SK-N-SH (cell line): ENCODE measurements at regions of chr11 and their contacts with region 1.

Region 1: DNA sequence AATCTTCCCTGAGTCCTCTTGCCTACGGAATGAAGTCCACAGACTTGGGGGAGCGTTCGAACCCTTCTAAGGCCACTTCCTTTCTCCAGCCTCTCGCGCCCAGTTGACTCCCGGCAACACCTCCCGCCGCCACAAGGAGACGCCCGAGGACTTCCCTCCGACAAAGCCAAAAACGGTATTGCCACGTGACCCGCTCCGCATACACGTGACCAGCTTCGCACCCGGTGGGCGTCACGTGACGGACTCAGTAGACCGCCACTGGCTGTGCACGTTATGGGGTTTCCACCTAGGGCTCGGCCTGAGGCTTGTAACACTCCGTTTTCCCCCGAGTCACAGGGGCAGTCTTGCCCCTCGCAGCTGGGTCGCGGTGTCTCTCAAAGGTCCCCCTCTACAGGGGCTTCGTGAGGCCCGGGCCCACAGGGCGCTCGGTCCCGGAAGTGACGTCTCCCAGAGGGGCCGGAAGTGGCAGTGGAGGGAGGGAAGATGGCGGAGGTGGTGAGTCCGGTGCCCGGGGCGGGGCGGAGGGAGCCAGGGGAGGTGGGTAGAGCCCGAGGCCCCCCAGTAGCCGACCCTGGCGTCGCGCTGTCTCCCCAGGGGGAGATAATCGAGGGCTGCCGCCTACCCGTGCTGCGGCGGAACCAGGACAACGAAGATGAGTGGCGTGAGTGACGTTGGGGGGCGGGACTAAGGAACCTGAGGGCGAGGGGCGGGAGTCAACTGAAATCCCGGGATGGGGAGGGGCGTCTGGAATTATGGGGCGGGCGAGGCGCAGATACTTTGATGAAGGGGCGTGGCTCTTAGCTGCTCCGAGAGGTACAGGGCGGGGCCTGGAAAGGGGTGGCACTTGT is at the start of gene KAT5:
- DNase-seq: peak; percentile 95
- H3K4me3 ChIP-seq: peak within 1 kb of the TSS; percentile 62 to 72
- H3K27ac ChIP-seq: peak within 1 kb of the TSS; percentile 96 to 98
- H3K4me1 ChIP-seq: peaks cover 6 to 8% of the 10 kb centered on the region in 2 experiments; a peak in 1 of 4 replicates
- H3K27me3 ChIP-seq: no peaks in the 10 kb centered on the region
- CTCF ChIP-seq: peak; percentile 95
- EP300 ChIP-seq: peak in 1 of 2 experiments; percentile 34; a peak in 1 of 4 replicates
- RAD21 ChIP-seq: peak; percentile 96
- polyA plus RNA-seq, gene KAT5: 44.5 and 51.9 TPM in 2 replicates

Region 2: DNA sequence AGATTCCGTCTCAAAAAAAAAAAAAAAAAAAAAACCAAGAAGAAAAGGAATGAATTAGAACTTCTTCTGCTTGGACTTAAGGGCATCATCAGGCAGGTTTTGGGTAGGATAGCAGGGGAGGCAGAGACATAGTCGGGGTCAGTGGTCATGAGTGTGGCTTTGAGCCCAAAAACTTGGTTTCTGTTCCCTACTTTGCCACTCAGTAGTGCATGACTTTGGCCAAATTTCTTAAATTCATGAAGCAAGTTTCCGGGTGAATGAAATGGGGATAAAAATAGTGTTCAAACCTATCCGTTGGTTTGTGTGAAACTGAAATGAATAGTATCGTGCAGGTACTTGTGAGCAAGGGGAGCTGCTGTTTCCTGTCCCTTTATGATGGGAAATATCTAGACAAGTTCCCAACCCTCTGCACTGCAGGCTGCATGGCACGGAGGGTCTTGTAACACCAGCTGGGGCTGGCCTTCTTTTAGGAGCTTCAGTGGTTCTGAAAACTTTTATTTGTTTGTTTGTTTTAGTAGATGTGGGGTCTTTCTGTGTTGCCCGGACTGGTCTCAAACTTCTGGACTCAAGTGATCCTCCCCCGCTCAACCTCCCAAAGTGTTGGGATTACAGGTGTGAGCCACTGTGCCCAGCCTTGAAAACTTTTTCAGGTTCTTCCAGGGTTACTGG is 271.0 kb before region 1 on chr11:
- CTCF ChIA-PET with region 1: no interaction called
- POLR2A ChIA-PET with region 1: no interaction called
- DNase-seq: no peak
- H3K4me3 ChIP-seq: no peak overlapping the region
- H3K27ac ChIP-seq: peak overlapping the region; percentile 1 to 100; a peak in 3 of 4 replicates
- H3K4me1 ChIP-seq: peaks cover 3 to 20% of the 10 kb centered on the region in 2 experiments; a peak in 3 of 4 replicates
- H3K27me3 ChIP-seq: no peaks in the 10 kb centered on the region
- CTCF ChIP-seq: no peak
- EP300 ChIP-seq: no peak
- RAD21 ChIP-seq: no peak

Region 3: GRCh38 chr11:65743928-65744698 is 32.1 kb after region 1 on chr11:
- CTCF ChIA-PET with region 1: interaction called, 26 read pairs
- POLR2A ChIA-PET with region 1: interaction called, 10 read pairs
- DNase-seq: peak; percentile 73
- H3K4me3 ChIP-seq: no peak overlapping the region
- H3K27ac ChIP-seq: no peak overlapping the region
- H3K4me1 ChIP-seq: peaks cover 0 to 10% of the 10 kb centered on the region in 2 experiments; a peak in 1 of 4 replicates
- H3K27me3 ChIP-seq: peaks cover 10% of the 10 kb centered on the region; the same call in 1 of the 2 replicates
- CTCF ChIP-seq: peak; percentile 49
- EP300 ChIP-seq: no peak
- RAD21 ChIP-seq: peak; percentile 69

Region 4: GRCh38 chr11:65785319-65786000 is 73.5 kb after region 1 on chr11:
- CTCF ChIA-PET with region 1: interaction called, 46 read pairs
- POLR2A ChIA-PET with region 1: interaction called, 5 read pairs
- DNase-seq: peak; percentile 28
- H3K4me3 ChIP-seq: no peak overlapping the region
- H3K27ac ChIP-seq: no peak overlapping the region
- H3K4me1 ChIP-seq: peaks cover 0 to 2% of the 10 kb centered on the region in 2 experiments; a peak in 1 of 4 replicates
- H3K27me3 ChIP-seq: peaks cover 38% of the 10 kb centered on the region
- CTCF ChIP-seq: no peak
- EP300 ChIP-seq: no peak
- RAD21 ChIP-seq: no peak

Region 5: DNA sequence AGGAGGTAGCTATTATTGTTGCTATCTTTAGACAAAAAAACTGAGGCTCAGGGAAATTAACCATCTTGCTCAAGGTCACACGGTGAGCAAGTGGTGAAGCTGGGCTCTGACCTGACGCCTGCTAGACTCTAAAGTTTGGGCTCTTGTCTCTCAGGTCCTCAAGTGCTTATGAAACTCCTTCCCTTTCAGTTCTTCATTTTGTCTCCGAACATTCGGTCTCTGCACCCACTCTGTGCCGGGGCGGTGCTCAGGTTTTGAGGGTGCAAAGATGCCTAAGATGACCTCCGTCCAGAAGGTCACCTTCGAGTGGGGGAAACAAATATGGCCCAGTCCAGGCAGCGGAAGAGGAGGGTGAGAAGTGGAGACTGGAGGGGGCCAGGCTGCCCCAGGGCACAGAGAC is 90.8 kb after region 1 on chr11:
- CTCF ChIA-PET with region 1: interaction called, 18 read pairs
- POLR2A ChIA-PET with region 1: no interaction called
- DNase-seq: no peak
- H3K4me3 ChIP-seq: no peak overlapping the region
- H3K27ac ChIP-seq: no peak overlapping the region
- H3K4me1 ChIP-seq: no peaks in the 10 kb centered on the region
- H3K27me3 ChIP-seq: peaks cover 39% of the 10 kb centered on the region; the same call in 1 of the 2 replicates
- CTCF ChIP-seq: no peak
- EP300 ChIP-seq: no peak
- RAD21 ChIP-seq: no peak

Region 6: GRCh38 chr11:65833297-65834030 is 121.5 kb after region 1 on chr11 and contains the start of gene SNX32:
- CTCF ChIA-PET with region 1: interaction called, 14 read pairs
- POLR2A ChIA-PET with region 1: interaction called, 5 read pairs
- DNase-seq: peak; percentile 99
- H3K4me3 ChIP-seq: peak within 1 kb of the TSS; percentile 28 to 73
- H3K27ac ChIP-seq: peak within 1 kb of the TSS in 1 of 2 experiments; percentile 64; a peak in 1 of 4 replicates
- H3K4me1 ChIP-seq: peaks cover 0 to 13% of the 10 kb centered on the region in 2 experiments; a peak in 1 of 4 replicates
- H3K27me3 ChIP-seq: no peaks in the 10 kb centered on the region
- CTCF ChIP-seq: no peak
- EP300 ChIP-seq: no peak
- RAD21 ChIP-seq: no peak
- polyA plus RNA-seq, gene SNX32: 0.81 and 1.0 TPM in 2 replicates

Region 7: DNA sequence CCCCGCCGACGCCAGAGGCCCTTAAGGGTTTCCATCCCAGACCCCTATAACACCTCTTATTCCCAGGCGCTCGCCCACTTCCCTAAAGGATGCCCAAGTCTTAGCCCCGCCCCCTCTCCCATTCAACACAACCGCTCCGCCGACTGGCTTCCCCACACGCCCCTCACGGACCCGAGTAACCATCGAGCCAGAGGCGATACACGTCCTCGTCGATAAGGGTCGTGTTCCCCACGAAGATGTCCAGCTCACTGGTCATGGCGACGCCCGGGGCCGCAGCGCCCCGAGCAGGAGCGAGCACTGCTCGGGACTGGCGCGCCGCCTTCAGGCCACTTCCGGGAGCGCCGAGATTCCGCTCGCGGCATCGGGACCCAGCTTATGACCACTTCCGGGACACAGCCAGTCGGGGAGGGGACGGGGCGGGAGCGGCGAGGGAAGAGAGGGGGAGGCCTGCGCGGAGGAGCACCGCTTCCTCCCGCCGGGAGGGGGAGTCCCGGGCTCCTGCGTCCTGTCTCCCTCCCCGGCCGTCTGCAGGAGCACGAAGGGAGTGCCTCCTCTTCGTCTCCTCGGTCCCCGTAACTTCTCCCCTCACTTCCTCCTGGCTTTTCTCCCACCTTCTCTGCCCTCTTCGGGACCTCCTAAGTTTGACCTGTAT is 176.3 kb after region 1 on chr11 and contains the start of gene FIBP:
- CTCF ChIA-PET with region 1: interaction called, 42 read pairs
- POLR2A ChIA-PET with region 1: interaction called, 7 read pairs
- DNase-seq: peak; percentile 97
- H3K4me3 ChIP-seq: peak within 1 kb of the TSS; percentile 56 to 82
- H3K27ac ChIP-seq: peak within 1 kb of the TSS; percentile 94 to 99
- H3K4me1 ChIP-seq: peaks cover 41 to 52% of the 10 kb centered on the region in 2 experiments
- H3K27me3 ChIP-seq: no peaks in the 10 kb centered on the region
- CTCF ChIP-seq: peak; percentile 68
- EP300 ChIP-seq: no peak
- RAD21 ChIP-seq: peak; percentile 24
- polyA plus RNA-seq, gene FIBP: 159 and 190 TPM in 2 replicates